ENCODE measurements at regions of chr3 and their contacts with region 1.

Region 1: GRCh38 chr3:24680214-24680967 is 185.7 kb upstream of the THRB start:
- DNase-seq: peak; percentile 25
- H3K4me3 ChIP-seq: no peak overlapping the region
- H3K27ac ChIP-seq: no peak overlapping the region
- H3K4me1 ChIP-seq: peaks cover 28% of the 10 kb centered on the region
- H3K27me3 ChIP-seq: no peaks in the 10 kb centered on the region
- CTCF ChIP-seq: peak; percentile 76 to 78

Region 2: GRCh38 chr3:23183734-23184133 is 1496.7 kb before region 1 on chr3:
- CTCF ChIA-PET with region 1: interaction called, 19 read pairs
- dilution Hi-C with region 1: no loop called
- in situ Hi-C with region 1: no loop called
- intact Hi-C with region 1: no loop called
- DNase-seq: peak; percentile 62
- H3K4me3 ChIP-seq: no peak overlapping the region
- H3K27ac ChIP-seq: no peak overlapping the region
- H3K4me1 ChIP-seq: no peaks in the 10 kb centered on the region
- H3K27me3 ChIP-seq: no peaks in the 10 kb centered on the region
- CTCF ChIP-seq: peak; percentile 60 to 65

Region 3: DNA sequence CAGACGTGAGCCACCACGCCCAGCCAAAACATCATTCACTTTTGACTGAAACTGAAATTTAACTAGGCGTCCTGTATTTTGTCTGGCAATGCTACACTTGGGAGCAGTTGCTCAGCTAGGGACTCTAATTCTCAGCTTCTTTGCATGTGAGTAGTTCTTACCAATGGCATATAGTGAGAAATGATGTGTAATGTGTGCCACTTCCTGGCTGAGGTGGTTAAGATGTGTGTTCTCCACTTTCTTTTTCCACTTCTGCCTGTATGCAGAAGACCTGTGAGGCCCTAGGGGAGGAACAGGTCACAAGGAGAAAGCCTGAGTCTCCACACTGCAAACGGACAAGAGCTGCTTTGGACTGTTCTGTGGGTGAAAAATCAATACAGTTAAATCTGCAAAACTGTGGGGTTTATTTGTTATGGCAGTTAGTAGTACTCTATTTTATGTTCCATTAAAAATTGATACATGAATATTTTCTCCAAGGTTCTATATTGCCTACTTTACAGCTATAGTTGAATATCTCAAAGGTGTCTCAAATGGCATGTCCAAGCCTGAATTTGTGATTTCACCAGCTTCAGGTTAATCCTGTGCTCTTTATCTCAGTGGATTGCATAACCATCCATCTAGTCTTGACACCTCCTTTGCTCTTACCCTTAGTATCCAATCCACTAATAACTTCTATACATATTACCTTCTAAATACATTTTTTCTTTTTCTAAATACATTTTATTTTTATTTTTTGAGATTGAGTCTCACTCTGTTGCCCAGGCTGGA is 676.0 kb before region 1 on chr3:
- CTCF ChIA-PET with region 1: no interaction called
- dilution Hi-C with region 1: no loop called
- in situ Hi-C with region 1: loop called (anchors 25 kb)
- intact Hi-C with region 1: loop called (anchors 1 kb)
- DNase-seq: peak; percentile 58
- H3K4me3 ChIP-seq: no peak overlapping the region
- H3K27ac ChIP-seq: no peak overlapping the region
- H3K4me1 ChIP-seq: peaks cover 3% of the 10 kb centered on the region
- H3K27me3 ChIP-seq: no peaks in the 10 kb centered on the region
- CTCF ChIP-seq: no peak

Region 4: GRCh38 chr3:24185738-24186384 is 494.5 kb before region 1 on chr3:
- CTCF ChIA-PET with region 1: interaction called, 3 read pairs
- dilution Hi-C with region 1: no loop called
- in situ Hi-C with region 1: no loop called
- intact Hi-C with region 1: loop called (anchors 2 kb)
- DNase-seq: peak; percentile 58
- H3K4me3 ChIP-seq: no peak overlapping the region
- H3K27ac ChIP-seq: no peak overlapping the region
- H3K4me1 ChIP-seq: no peaks in the 10 kb centered on the region
- H3K27me3 ChIP-seq: no peaks in the 10 kb centered on the region
- CTCF ChIP-seq: peak; percentile 64 to 66

Region 5: DNA sequence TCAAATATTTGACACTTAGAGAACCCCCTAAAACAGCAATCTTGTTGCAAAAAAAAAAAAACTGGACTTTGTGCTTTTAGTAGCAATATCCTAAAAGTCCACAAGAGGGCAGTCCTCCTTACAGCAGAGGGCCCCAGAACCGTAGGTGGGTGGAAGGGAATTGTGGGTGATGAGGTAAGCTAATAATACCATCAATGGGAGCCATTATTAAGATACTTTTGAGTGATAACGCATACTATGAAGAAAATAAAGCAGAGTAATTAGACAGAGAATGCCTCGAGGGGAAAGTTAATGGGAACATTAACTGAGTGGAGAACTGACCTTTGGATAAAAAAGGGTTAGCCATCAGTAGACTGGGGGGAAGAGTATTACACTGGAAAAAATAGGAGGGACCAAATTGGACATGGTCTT is 415.6 kb before region 1 on chr3:
- CTCF ChIA-PET with region 1: no interaction called
- dilution Hi-C with region 1: loop called (anchors 25 kb)
- in situ Hi-C with region 1: loop called in 1 of 2 experiments (anchors 25 kb)
- intact Hi-C with region 1: loop called (anchors 1 kb)
- DNase-seq: peak; percentile 29
- H3K4me3 ChIP-seq: no peak overlapping the region
- H3K27ac ChIP-seq: no peak overlapping the region
- H3K4me1 ChIP-seq: no peaks in the 10 kb centered on the region
- H3K27me3 ChIP-seq: no peaks in the 10 kb centered on the region
- CTCF ChIP-seq: peak; percentile 71 to 82

Region 6: GRCh38 chr3:24591661-24592522 is 88.5 kb before region 1 on chr3:
- CTCF ChIA-PET with region 1: interaction called, 4 read pairs
- dilution Hi-C with region 1: no loop called
- in situ Hi-C with region 1: no loop called
- intact Hi-C with region 1: loop called (anchors 5 kb)
- DNase-seq: peak; percentile 99
- H3K4me3 ChIP-seq: no peak overlapping the region
- H3K27ac ChIP-seq: peak overlapping the region; percentile 87
- H3K4me1 ChIP-seq: peaks cover 43% of the 10 kb centered on the region
- H3K27me3 ChIP-seq: no peaks in the 10 kb centered on the region
- CTCF ChIP-seq: no peak

Region 7: GRCh38 chr3:24714436-24714835 is 34.0 kb after region 1 on chr3:
- CTCF ChIA-PET with region 1: interaction called, 38 read pairs
- dilution Hi-C with region 1: no loop called
- in situ Hi-C with region 1: no loop called
- intact Hi-C with region 1: no loop called
- DNase-seq: no peak
- H3K4me3 ChIP-seq: no peak overlapping the region
- H3K27ac ChIP-seq: no peak overlapping the region
- H3K4me1 ChIP-seq: no peaks in the 10 kb centered on the region
- H3K27me3 ChIP-seq: no peaks in the 10 kb centered on the region
- CTCF ChIP-seq: no peak